ENCODE measurements at regions of chr1 and their contacts with region 1.

Region 1: DNA sequence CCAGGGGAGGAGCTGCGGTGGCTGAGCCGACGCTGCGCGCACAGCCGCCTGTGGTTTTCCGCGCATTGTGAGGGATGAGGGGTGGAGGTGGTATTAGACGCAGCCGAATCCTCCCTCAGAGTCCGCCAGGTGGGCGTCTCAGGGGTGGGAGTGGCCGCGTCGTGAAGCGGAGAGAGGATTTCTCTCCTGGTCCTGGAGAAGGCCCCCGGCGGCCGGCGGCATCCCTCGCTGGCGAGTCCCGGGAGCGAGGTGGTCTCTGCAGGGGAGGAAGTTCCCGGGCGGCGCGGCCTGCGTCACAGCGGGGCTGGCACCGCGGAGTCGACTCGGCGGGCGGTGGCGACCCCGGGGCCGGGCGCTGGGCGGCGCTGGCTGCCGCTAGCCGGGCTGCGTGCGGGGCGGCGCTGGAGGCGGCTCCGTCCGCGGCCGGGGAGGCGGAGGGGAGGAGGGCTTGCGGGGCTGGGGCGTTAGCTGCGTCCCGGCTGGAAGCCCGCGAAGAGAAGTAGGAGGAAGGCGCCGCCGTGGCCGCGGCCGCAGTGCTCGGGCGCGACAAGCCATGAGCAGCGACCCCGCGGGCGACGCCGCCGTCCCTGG is at the start of gene LRRC8C:
- DNase-seq: peak; percentile 90 to 95 (median 92)
- H3K4me3 ChIP-seq: peak within 1 kb of the TSS; percentile 73 to 89
- H3K4me3 Mint-ChIP-seq: peak within 1 kb of the TSS; percentile 96 to 99 (median 98)
- H3K27ac ChIP-seq: peak within 1 kb of the TSS; percentile 96
- H3K27ac Mint-ChIP-seq: peak within 1 kb of the TSS; percentile 96 to 99 (median 98)
- H3K4me1 ChIP-seq: peaks cover 76% of the 10 kb centered on the region
- H3K4me1 Mint-ChIP-seq: peaks cover 60 to 90% (median 74%) of the 10 kb centered on the region in 4 donors
- H3K27me3 ChIP-seq: no peaks in the 10 kb centered on the region
- H3K27me3 Mint-ChIP-seq: no peaks in the 10 kb centered on the region
- total RNA-seq, gene LRRC8C: 56.7 to 57.1 TPM

Region 2: GRCh38 chr1:89524369-89525168 is 108.2 kb before region 1 on chr1 and contains the start of gene LRRC8B:
- CTCF ChIA-PET with region 1: interaction called, 6 read pairs
- POLR2A ChIA-PET with region 1: interaction called, 4 read pairs
- intact Hi-C with region 1: loop called (anchors 1 kb)
- DNase-seq: peak; percentile 85 to 90 (median 88)
- H3K4me3 ChIP-seq: peak within 1 kb of the TSS; percentile 91 to 93
- H3K4me3 Mint-ChIP-seq: peak within 1 kb of the TSS in 5 of 8 donors; percentile 82 to 97 (median 87)
- H3K27ac ChIP-seq: peak within 1 kb of the TSS; percentile 92
- H3K27ac Mint-ChIP-seq: peak within 1 kb of the TSS in 6 of 7 donors; percentile 91 to 98 (median 96)
- H3K4me1 ChIP-seq: peaks cover 50% of the 10 kb centered on the region
- H3K4me1 Mint-ChIP-seq: peaks cover 11 to 21% (median 14%) of the 10 kb centered on the region in 4 donors
- H3K27me3 ChIP-seq: no peaks in the 10 kb centered on the region
- H3K27me3 Mint-ChIP-seq: no peaks in the 10 kb centered on the region
- total RNA-seq, gene LRRC8B: 15.6 to 18.1 TPM

Region 3: DNA sequence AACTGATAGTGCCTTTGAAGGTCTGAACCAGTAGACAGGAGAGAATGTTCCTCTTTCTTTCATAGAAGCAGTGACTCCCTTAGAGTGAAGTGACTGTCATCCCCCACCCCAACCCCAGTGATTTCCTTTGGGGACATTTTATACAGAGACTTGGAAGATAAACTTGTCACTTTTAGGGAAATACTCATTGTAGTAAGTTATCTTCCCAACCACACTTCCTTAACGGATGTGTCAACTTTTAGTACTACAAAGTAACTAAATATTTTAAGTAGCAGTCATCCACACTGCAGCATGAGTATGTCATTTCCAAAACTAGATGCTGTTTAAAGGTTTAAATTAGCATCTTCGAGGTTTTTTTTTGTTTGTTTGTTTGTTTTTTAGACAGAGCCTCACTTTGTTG is 94.4 kb before region 1 on chr1:
- CTCF ChIA-PET with region 1: no interaction called
- POLR2A ChIA-PET with region 1: no interaction called
- intact Hi-C with region 1: no loop called
- DNase-seq: no peak
- H3K4me3 ChIP-seq: no peak overlapping the region
- H3K4me3 Mint-ChIP-seq: no peak overlapping the region
- H3K27ac ChIP-seq: no peak overlapping the region
- H3K27ac Mint-ChIP-seq: peak overlapping the region in 1 of 7 donors; percentile 26
- H3K4me1 ChIP-seq: peaks cover 24% of the 10 kb centered on the region
- H3K4me1 Mint-ChIP-seq: peaks cover 32 to 63% (median 48%) of the 10 kb centered on the region in 4 donors
- H3K27me3 ChIP-seq: no peaks in the 10 kb centered on the region
- H3K27me3 Mint-ChIP-seq: no peaks in the 10 kb centered on the region

Region 4: DNA sequence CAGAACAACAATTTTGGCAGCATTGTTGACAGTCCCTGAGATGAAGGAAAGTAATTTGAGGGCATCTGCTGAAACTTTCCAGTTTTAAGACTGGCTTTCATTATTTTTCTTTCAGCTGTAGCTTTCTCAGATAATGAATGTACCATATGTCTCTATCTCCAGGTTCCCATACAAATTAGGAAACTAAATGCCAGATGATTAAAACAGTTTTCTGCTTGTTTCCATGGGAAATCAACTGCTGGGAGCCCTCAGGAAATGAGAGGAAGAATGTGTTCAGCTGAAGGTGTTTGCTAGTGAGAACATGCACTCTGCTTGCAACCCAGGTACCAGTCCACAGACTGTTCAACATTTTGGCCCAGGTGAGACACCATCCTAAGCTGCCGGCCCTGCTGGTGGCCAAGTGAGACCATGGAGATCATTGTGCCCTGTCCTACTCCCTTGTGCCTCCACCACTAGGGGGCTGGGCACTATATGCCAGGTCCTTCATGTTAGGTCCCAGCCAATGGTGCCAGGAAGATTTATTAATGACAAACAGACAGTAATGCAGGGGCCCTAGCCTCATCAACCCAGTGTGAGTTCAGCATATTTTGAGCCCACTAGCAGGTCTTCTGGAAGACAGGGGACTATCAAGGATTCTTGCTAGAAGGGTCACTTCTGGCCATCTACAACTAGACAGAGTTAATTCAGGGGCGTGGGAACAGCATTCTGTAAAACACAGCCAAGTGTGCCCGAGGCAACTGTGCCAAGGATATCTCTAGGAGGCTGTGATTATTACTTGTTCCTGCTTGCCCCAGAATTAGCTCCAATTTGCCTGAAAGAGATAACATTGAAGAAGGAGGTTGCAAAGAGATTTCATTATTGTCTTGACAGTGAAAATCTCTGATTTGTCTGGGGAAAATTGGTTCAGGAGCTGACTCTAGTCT is 16.8 kb before region 1 on chr1:
- CTCF ChIA-PET with region 1: interaction called, 688 read pairs
- POLR2A ChIA-PET with region 1: interaction called, 813 read pairs
- intact Hi-C with region 1: no loop called
- DNase-seq: no peak
- H3K4me3 ChIP-seq: no peak overlapping the region
- H3K4me3 Mint-ChIP-seq: no peak overlapping the region
- H3K27ac ChIP-seq: no peak overlapping the region
- H3K27ac Mint-ChIP-seq: peak overlapping the region in 6 of 7 donors; percentile 5 to 71 (median 44)
- H3K4me1 ChIP-seq: peaks cover 69% of the 10 kb centered on the region
- H3K4me1 Mint-ChIP-seq: peaks cover 51 to 92% (median 71%) of the 10 kb centered on the region in 4 donors
- H3K27me3 ChIP-seq: no peaks in the 10 kb centered on the region
- H3K27me3 Mint-ChIP-seq: no peaks in the 10 kb centered on the region

Region 5: DNA sequence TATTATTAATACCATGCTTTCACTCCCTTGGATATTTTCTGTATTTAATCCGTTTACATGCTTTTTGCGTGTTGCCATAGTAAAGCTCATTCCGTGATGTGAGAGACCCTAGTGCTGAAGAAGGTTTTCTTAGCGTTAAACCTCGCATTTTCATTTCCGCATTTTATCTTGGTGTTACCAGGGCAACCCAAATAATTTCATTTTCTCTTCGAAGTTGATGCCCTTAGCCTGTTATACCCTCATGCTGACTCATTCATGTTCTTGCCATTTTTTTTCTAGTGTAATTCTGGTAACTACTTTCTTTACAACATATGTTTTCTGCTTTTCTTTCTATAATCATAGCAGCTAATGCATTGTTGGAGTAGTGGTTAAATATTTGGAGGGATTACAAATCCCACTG is 37.4 kb after region 1 on chr1:
- CTCF ChIA-PET with region 1: interaction called, 5 read pairs
- POLR2A ChIA-PET with region 1: interaction called, 18 read pairs
- intact Hi-C with region 1: no loop called
- DNase-seq: peak; percentile 65 to 79 (median 70)
- H3K4me3 ChIP-seq: no peak overlapping the region
- H3K4me3 Mint-ChIP-seq: peak overlapping the region; percentile 4 to 82 (median 72)
- H3K27ac ChIP-seq: no peak overlapping the region
- H3K27ac Mint-ChIP-seq: peak overlapping the region; percentile 19 to 93 (median 84)
- H3K4me1 ChIP-seq: peaks cover 96% of the 10 kb centered on the region
- H3K4me1 Mint-ChIP-seq: peaks cover 79 to 97% (median 87%) of the 10 kb centered on the region in 4 donors
- H3K27me3 ChIP-seq: no peaks in the 10 kb centered on the region
- H3K27me3 Mint-ChIP-seq: no peaks in the 10 kb centered on the region

Region 6: DNA sequence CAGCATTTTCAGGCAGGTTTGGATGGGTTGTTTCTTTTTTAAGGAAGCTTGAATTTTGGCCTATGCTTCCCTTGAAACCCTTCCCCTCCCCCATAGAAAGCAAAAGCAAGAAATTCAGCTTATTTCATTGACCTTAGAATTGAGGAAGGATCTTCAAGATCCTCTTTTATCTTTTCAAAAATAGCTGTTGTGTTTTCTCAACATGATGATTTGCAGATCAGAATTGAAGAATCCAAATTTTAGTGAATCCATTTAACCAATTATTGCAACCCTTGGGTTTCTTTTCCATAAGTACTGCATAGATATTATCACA is 73.9 kb after region 1 on chr1:
- CTCF ChIA-PET with region 1: no interaction called
- POLR2A ChIA-PET with region 1: no interaction called
- intact Hi-C with region 1: no loop called
- DNase-seq: no peak
- H3K4me3 ChIP-seq: no peak overlapping the region
- H3K4me3 Mint-ChIP-seq: no peak overlapping the region
- H3K27ac ChIP-seq: no peak overlapping the region
- H3K27ac Mint-ChIP-seq: peak overlapping the region in 3 of 7 donors; percentile 17 to 59 (median 47)
- H3K4me1 ChIP-seq: peaks cover 27% of the 10 kb centered on the region
- H3K4me1 Mint-ChIP-seq: peaks cover 29 to 68% (median 50%) of the 10 kb centered on the region in 4 donors
- H3K27me3 ChIP-seq: no peaks in the 10 kb centered on the region
- H3K27me3 Mint-ChIP-seq: no peaks in the 10 kb centered on the region

Region 7: DNA sequence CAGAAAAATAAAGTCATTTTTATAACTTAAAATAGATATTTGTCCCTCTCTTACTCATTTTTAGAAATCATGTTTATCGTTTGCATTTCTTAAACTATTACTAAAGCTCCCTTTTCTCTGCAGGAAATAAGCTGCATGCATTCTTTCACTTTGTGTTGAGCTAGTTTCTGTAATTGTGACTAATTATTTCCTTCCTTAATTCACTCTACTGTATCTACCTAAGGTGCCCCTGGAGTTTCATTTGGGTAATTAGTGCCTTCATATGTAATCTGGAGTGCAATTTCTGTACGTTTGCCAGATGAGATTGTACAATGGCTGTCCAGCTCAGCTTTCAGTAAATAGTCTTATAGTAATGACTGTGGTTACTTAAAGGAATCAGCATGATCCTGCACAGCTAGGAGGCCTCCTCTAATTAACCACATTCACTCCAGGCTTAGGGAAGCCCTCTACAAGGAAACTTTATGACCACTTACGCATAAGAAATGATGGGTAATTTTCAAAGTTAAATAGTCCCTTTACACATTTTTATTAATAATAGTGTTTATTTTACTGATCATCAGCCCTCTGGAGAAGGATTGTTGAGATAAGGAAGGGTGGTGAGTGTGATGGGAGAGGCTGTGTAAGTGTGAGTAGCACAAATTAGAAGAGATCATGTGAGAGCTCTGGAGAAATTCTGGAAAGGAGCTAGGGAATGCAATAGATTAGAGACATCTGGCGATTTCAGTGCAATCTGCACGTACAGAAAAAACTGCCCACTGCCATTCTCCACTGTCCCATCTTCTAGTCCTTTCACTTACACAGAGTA is 87.0 kb after region 1 on chr1:
- CTCF ChIA-PET with region 1: interaction called, 45 read pairs
- POLR2A ChIA-PET with region 1: interaction called, 72 read pairs
- intact Hi-C with region 1: loop called (anchors 1 kb)
- DNase-seq: peak in 4 of 5 donors; percentile 30 to 45 (median 37)
- H3K4me3 ChIP-seq: no peak overlapping the region
- H3K4me3 Mint-ChIP-seq: peak overlapping the region in 7 of 8 donors; percentile 25 to 83 (median 70)
- H3K27ac ChIP-seq: peak overlapping the region; percentile 50
- H3K27ac Mint-ChIP-seq: peak overlapping the region; percentile 84 to 96 (median 91)
- H3K4me1 ChIP-seq: peaks cover 83% of the 10 kb centered on the region
- H3K4me1 Mint-ChIP-seq: peaks cover 52 to 81% (median 72%) of the 10 kb centered on the region in 4 donors
- H3K27me3 ChIP-seq: no peaks in the 10 kb centered on the region
- H3K27me3 Mint-ChIP-seq: no peaks in the 10 kb centered on the region

Measured in CD4-positive, alpha-beta memory T cell (primary cell).